ENCODE measurements at regions of chr1 and their contacts with region 1.

Region 1: GRCh38 chr1:31400393-31400792 is 12.6 kb upstream of the SERINC2 start:
- DNase-seq: no peak
- H3K4me3 ChIP-seq: no peak overlapping the region
- H3K4me3 Mint-ChIP-seq: no peak overlapping the region
- H3K27ac Mint-ChIP-seq: no peak overlapping the region
- H3K4me1 ChIP-seq: peaks cover 7% of the 10 kb centered on the region; the same call in 1 of the 2 replicates
- H3K4me1 Mint-ChIP-seq: peaks cover 6% of the 10 kb centered on the region
- H3K27me3 ChIP-seq: no peaks in the 10 kb centered on the region
- H3K27me3 Mint-ChIP-seq: no peaks in the 10 kb centered on the region
- CTCF ChIP-seq: no peak

Region 2: GRCh38 chr1:29498126-29499120 is 1902.0 kb before region 1 on chr1:
- CTCF ChIA-PET with region 1: no interaction called
- POLR2A ChIA-PET with region 1: interaction called, 22 read pairs
- intact Hi-C with region 1: no loop called
- DNase-seq: no peak
- H3K4me3 ChIP-seq: no peak overlapping the region
- H3K4me3 Mint-ChIP-seq: no peak overlapping the region
- H3K27ac Mint-ChIP-seq: no peak overlapping the region
- H3K4me1 ChIP-seq: no peaks in the 10 kb centered on the region
- H3K4me1 Mint-ChIP-seq: no peaks in the 10 kb centered on the region
- H3K27me3 ChIP-seq: no peaks in the 10 kb centered on the region
- H3K27me3 Mint-ChIP-seq: peaks cover 10% of the 10 kb centered on the region
- CTCF ChIP-seq: no peak

Measured in Caco-2 (cell line).